Naive thymus-derived CD4-positive, alpha-beta T cell (primary cell): ENCODE measurements at regions of chr3 and their contacts with region 1.

Region 1: DNA sequence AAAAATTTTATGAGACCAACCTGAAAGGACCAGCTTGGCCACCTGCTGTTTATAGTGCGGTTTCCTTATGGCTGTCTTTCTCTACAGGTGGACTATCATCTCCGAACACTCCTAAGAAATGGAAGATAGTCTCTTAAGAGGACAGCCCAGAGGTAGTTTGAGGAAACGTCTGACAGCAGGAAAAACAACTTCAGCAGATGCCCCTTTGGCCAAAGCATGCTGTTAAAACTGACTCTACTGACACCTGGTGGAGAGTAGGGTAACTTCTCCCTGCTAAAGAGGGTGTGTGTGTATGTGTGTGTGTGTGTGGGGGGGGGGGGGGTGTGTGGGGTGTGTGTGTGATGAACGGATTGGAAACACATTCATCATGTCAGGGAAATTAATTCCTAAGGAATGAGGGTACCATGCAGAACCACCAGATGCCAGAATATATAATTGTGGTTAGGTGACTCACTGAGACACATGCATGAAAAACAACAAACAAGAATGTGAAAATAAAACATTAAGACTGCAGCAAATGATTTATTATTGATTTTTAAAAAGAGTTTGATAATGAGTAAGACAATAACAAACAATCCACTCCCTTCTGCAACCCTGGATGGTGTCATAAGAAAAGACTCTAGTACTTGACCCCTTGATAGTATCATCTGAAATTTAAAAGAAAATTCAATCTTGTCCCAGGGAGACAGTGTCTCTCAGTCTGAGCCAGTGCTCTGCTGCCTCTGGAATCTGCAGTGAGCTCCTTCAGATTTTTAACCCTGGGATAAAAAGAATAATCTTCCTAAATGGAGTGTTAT is 256.5 kb downstream of the THRB start:
- DNase-seq: peak in 5 of 9 donors; percentile 8 to 46 (median 33)
- ATAC-seq: peak; percentile 75
- H3K4me3 ChIP-seq: no peak overlapping the region
- H3K4me3 Mint-ChIP-seq: no peak overlapping the region
- H3K27ac ChIP-seq: no peak overlapping the region
- H3K27ac Mint-ChIP-seq: no peak overlapping the region
- H3K4me1 ChIP-seq: no peaks in the 10 kb centered on the region
- H3K4me1 Mint-ChIP-seq: no peaks in the 10 kb centered on the region
- H3K27me3 ChIP-seq: no peaks in the 10 kb centered on the region
- H3K27me3 Mint-ChIP-seq: peaks cover 0 to 9% (median 4%) of the 10 kb centered on the region in 5 donors

Region 2: DNA sequence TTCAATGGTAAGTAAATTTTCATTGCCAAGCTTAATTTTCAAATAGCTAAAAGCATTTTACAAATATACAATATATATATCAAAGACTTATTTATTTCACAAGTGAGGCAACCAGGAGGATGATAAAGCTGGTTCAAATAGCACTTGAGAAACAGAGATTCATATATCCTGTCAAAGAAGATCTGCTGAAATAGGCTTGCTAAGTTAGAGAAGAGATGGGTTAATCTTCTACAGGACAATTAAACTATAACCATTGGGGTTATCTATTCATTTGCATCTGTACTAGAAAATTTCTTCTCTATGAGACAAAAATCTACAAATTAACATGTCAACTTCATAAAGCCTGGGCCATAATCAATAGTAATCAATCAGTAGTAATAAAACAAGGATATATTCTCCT is 1672.8 kb before region 1 on chr3:
- CTCF ChIA-PET with region 1: no interaction called
- POLR2A ChIA-PET with region 1: no interaction called
- intact Hi-C with region 1: loop called in 1 of 2 experiments (anchors 10 kb)
- DNase-seq: no peak
- ATAC-seq: no peak
- H3K4me3 ChIP-seq: no peak overlapping the region
- H3K4me3 Mint-ChIP-seq: no peak overlapping the region
- H3K27ac ChIP-seq: no peak overlapping the region
- H3K27ac Mint-ChIP-seq: no peak overlapping the region
- H3K4me1 ChIP-seq: no peaks in the 10 kb centered on the region
- H3K4me1 Mint-ChIP-seq: no peaks in the 10 kb centered on the region
- H3K27me3 ChIP-seq: no peaks in the 10 kb centered on the region
- H3K27me3 Mint-ChIP-seq: peaks cover 0 to 3% (median 0%) of the 10 kb centered on the region in 5 donors

Region 3: DNA sequence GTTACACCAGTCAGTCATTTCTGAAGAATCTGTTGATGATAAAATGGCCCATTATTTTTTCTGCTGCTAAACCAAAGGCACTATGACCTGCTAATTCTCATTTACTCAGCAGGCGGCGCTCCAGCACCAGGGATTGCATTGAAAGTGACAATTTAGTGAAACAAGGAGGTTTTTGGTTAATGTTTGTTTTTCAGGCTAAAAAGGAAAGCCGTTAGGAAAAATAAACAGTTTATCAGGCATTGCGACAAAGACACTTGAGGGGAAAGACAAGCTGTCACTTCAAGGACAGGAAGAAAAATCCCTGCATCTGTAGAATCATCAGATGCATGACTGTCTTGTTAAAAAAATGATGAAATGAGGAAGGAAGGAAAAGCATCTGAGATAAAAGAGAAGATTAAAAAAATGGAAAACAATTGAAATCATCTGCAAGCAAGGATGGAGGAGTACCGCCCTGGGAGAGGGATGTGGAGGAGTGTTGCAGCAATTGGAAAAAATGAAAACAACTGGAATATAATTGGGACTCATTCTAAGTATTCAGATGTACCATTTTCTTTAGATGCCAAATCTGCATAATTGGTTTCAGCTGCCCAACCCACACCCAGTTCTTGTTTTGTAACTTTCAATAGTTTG is 239.0 kb before region 1 on chr3:
- CTCF ChIA-PET with region 1: no interaction called
- POLR2A ChIA-PET with region 1: no interaction called
- intact Hi-C with region 1: loop called in 1 of 2 experiments (anchors 1 kb)
- DNase-seq: peak in 8 of 9 donors; percentile 24 to 64 (median 29)
- ATAC-seq: peak; percentile 49
- H3K4me3 ChIP-seq: no peak overlapping the region
- H3K4me3 Mint-ChIP-seq: no peak overlapping the region
- H3K27ac ChIP-seq: no peak overlapping the region
- H3K27ac Mint-ChIP-seq: no peak overlapping the region
- H3K4me1 ChIP-seq: no peaks in the 10 kb centered on the region
- H3K4me1 Mint-ChIP-seq: peaks cover 0 to 6% (median 4%) of the 10 kb centered on the region in 7 donors
- H3K27me3 ChIP-seq: no peaks in the 10 kb centered on the region
- H3K27me3 Mint-ChIP-seq: peaks cover 0 to 20% (median 3%) of the 10 kb centered on the region in 5 donors

Region 4: DNA sequence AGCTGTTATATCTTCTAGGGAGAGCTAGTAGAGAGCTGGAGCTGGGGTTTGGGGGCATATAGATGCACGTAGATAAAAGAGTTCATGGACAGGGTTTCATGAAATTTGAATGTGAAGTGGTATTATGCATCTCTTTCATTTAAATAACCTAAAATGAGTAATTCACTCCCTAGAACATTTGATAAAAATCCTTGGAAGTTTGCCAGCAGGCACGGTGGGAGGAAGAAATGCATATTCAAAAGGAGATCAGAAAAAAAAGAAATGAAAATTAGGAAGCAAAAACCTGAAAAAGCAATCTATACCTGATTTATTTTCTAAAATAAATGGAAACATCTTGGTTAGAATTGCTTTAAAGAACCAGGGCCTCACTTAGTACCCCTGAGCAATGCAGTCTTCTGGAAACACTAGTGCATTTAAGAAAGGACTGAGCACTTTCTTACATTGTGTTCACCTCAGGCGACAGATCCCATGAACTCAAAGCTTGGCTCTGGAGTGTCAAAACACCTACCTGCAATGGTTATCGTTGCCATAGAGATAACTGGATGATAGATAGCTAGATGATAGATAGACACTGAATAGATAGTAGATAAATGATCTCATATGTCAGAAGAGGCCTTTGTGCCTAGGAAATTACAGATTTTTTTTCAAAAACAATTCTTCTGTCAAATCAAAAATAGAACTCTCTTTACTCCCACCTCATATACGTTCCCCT is 715.0 kb after region 1 on chr3:
- CTCF ChIA-PET with region 1: no interaction called
- POLR2A ChIA-PET with region 1: no interaction called
- intact Hi-C with region 1: no loop called
- DNase-seq: no peak
- ATAC-seq: no peak
- H3K4me3 ChIP-seq: no peak overlapping the region
- H3K4me3 Mint-ChIP-seq: no peak overlapping the region
- H3K27ac ChIP-seq: no peak overlapping the region
- H3K27ac Mint-ChIP-seq: no peak overlapping the region
- H3K4me1 ChIP-seq: no peaks in the 10 kb centered on the region
- H3K4me1 Mint-ChIP-seq: no peaks in the 10 kb centered on the region
- H3K27me3 ChIP-seq: no peaks in the 10 kb centered on the region
- H3K27me3 Mint-ChIP-seq: peaks cover 0 to 7% (median 0%) of the 10 kb centered on the region in 5 donors